ENCODE measurements at regions of chr5 and their contacts with region 1.

Region 1: DNA sequence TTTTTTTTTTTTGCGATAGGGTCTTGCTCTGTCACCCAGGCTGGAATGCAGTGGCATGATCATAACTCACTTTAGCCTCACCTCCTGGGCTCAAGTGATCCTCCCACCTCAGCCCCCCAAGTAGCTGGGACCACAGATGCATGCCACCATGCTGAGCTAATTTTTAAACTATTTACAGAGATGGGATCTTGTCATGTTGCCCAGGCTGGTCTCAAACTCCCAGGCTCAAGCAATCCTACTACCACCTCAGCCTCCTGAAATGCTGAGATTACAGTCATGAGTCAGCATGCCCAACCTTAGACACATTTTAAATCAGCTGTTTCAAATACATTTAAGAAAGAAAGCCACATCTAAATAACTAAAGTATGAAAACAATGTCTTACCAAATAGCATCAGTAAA is 439.0 kb downstream of the EBF1 start:
- DNase-seq: no peak
- ATAC-seq: no peak
- H3K4me3 Mint-ChIP-seq: no peak overlapping the region
- H3K27ac Mint-ChIP-seq: no peak overlapping the region
- H3K4me1 Mint-ChIP-seq: no peaks in the 10 kb centered on the region
- H3K27me3 Mint-ChIP-seq: no peaks in the 10 kb centered on the region
- CTCF ChIP-seq: no peak

Region 2: GRCh38 chr5:158676642-158677469 is 16.1 kb after region 1 on chr5:
- CTCF ChIA-PET with region 1: interaction called, 3 read pairs
- POLR2A ChIA-PET with region 1: interaction called, 13 read pairs
- intact Hi-C with region 1: no loop called
- DNase-seq: no peak
- ATAC-seq: peak; percentile 83
- H3K4me3 Mint-ChIP-seq: peak overlapping the region; percentile 74
- H3K27ac Mint-ChIP-seq: peak overlapping the region; percentile 92
- H3K4me1 Mint-ChIP-seq: peaks cover 28% of the 10 kb centered on the region
- H3K27me3 Mint-ChIP-seq: no peaks in the 10 kb centered on the region
- CTCF ChIP-seq: no peak

Region 3: DNA sequence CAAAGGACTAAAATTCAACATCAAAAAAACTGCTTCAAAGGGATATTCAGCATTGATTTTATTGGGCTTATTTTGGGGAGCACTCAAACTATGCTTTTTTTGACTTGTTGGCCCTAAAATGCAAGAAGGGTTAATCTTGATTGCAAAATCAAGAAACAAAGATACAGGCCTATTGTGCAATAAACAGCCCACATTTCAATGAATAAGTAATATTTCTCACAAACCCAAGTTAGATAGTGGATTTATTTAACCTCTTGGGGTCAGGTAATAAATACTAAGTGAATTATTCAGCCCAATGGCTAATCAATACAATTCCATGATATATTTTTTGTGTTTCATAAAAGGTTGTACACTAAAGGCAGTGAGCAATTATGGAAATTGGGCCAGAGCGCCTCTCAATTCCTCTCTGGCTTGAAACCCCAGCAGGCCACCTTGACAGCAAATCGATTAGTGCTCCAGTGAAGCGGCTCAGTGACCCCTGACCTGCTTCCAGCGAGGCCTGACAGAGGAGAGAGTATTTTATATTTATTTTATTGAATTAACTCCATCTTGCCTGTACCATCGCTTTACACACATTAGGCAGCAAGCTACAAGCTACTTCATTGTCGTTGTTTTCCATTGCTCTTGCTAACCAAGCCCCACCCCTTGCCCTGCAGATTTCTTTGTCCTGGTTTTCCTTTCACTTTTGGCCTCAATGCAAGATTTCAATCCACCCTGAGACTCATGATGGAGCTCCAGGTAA is 373.5 kb after region 1 on chr5:
- CTCF ChIA-PET with region 1: no interaction called
- POLR2A ChIA-PET with region 1: no interaction called
- intact Hi-C with region 1: no loop called
- DNase-seq: no peak
- ATAC-seq: peak; percentile 51
- H3K4me3 Mint-ChIP-seq: peak overlapping the region; percentile 48
- H3K27ac Mint-ChIP-seq: peak overlapping the region; percentile 64
- H3K4me1 Mint-ChIP-seq: peaks cover 75% of the 10 kb centered on the region
- H3K27me3 Mint-ChIP-seq: no peaks in the 10 kb centered on the region
- CTCF ChIP-seq: no peak

Region 4: GRCh38 chr5:159218595-159219023 is 557.9 kb after region 1 on chr5:
- CTCF ChIA-PET with region 1: no interaction called
- POLR2A ChIA-PET with region 1: no interaction called
- intact Hi-C with region 1: no loop called
- DNase-seq: no peak
- ATAC-seq: no peak
- H3K4me3 Mint-ChIP-seq: no peak overlapping the region
- H3K27ac Mint-ChIP-seq: no peak overlapping the region
- H3K4me1 Mint-ChIP-seq: no peaks in the 10 kb centered on the region
- H3K27me3 Mint-ChIP-seq: no peaks in the 10 kb centered on the region
- CTCF ChIP-seq: no peak